ENCODE measurements at regions of chr6 and their contacts with region 1.

Region 1: GRCh38 chr6:124506696-124507095 is 455.5 kb upstream of the RNF217 start:
- DNase-seq: no peak
- H3K4me3 ChIP-seq: no peak overlapping the region
- CTCF ChIP-seq: no peak

Region 2: DNA sequence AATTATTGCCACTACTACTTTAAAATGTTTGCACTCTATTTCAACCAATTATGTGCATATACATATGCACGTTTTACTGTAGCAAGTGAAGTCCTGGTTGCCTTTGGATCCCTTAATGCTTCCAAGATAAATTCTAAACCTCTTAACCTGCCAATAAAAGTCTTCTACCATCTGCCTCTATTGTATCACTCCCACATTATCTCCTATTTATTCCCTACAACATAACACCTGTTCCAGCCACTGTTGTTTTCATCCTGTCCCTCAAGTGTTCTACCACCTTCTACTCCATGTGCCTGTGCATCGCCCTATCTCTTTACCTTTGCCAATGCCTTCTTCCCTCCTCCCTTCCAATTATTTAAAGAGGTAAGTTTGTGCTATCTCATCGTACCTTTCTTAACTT is 43.4 kb before region 1 on chr6:
- in situ Hi-C with region 1: loop called (anchors 5 kb)
- DNase-seq: no peak
- H3K4me3 ChIP-seq: no peak overlapping the region
- CTCF ChIP-seq: no peak

Region 3: GRCh38 chr6:124546601-124547000 is 39.9 kb after region 1 on chr6:
- in situ Hi-C with region 1: no loop called
- DNase-seq: no peak
- H3K4me3 ChIP-seq: no peak overlapping the region
- CTCF ChIP-seq: no peak

Measured in astrocyte of the cerebellum (primary cell).